PC-9 (cell line): ENCODE measurements at regions of chr2 and their contacts with region 1.

Region 1: GRCh38 chr2:170145675-170146432 is 32.1 kb upstream of the MYO3B start:
- DNase-seq: no peak
- H3K4me3 ChIP-seq: no peak overlapping the region
- H3K27ac ChIP-seq: no peak overlapping the region
- H3K4me1 ChIP-seq: peaks cover 19% of the 10 kb centered on the region
- H3K27me3 ChIP-seq: no peaks in the 10 kb centered on the region
- CTCF ChIP-seq: no peak

Region 2: DNA sequence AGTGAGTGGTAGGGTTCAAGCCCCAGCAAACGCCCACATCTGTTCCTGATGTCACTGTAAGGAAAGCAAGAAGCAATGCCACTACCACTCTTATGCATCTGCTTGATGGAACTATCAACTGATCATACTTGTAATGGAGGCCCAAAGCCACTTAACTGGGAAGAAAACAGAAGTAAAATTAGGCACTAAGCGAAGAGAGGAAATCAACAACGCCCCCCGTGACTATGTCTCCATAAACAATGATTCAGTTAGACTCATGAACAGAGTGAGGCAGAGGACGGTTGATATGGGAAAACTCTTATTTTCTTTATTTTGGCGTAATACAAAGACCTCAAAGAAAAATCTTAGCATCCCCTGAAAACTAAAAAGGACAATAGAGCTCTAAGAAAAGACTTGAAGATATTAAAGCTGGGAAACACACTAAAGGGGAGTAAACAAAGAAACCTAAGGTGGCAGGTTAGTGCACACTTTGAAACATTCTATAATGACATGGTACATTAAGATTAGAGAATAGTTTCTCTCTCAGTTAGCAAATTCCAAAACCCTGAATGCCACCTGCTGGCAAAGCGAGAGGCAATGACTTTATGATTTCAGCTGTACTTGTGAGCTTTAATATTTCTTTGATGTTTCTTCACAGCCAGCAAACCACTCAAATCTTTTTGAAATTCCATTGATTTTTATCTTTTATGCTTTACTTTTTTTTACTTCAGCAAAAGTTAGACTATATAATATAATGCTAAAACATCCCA is 870.0 kb before region 1 on chr2:
- CTCF ChIA-PET with region 1: no interaction called
- POLR2A ChIA-PET with region 1: no interaction called
- intact Hi-C with region 1: no loop called
- DNase-seq: peak in 1 of 2 experiments; percentile 1
- H3K4me3 ChIP-seq: no peak overlapping the region
- H3K27ac ChIP-seq: no peak overlapping the region
- H3K4me1 ChIP-seq: no peaks in the 10 kb centered on the region
- H3K27me3 ChIP-seq: no peaks in the 10 kb centered on the region
- CTCF ChIP-seq: peak; percentile 47; the same call in 1 of the 2 replicates

Region 3: GRCh38 chr2:170162271-170162632 is 16.4 kb after region 1 on chr2:
- CTCF ChIA-PET with region 1: interaction called, 12 read pairs
- POLR2A ChIA-PET with region 1: no interaction called
- intact Hi-C with region 1: no loop called
- DNase-seq: peak; percentile 9 to 91
- H3K4me3 ChIP-seq: no peak overlapping the region
- H3K27ac ChIP-seq: peak overlapping the region; percentile 19; the same call in 1 of the 2 replicates
- H3K4me1 ChIP-seq: peaks cover 16% of the 10 kb centered on the region
- H3K27me3 ChIP-seq: no peaks in the 10 kb centered on the region
- CTCF ChIP-seq: no peak

Region 4: DNA sequence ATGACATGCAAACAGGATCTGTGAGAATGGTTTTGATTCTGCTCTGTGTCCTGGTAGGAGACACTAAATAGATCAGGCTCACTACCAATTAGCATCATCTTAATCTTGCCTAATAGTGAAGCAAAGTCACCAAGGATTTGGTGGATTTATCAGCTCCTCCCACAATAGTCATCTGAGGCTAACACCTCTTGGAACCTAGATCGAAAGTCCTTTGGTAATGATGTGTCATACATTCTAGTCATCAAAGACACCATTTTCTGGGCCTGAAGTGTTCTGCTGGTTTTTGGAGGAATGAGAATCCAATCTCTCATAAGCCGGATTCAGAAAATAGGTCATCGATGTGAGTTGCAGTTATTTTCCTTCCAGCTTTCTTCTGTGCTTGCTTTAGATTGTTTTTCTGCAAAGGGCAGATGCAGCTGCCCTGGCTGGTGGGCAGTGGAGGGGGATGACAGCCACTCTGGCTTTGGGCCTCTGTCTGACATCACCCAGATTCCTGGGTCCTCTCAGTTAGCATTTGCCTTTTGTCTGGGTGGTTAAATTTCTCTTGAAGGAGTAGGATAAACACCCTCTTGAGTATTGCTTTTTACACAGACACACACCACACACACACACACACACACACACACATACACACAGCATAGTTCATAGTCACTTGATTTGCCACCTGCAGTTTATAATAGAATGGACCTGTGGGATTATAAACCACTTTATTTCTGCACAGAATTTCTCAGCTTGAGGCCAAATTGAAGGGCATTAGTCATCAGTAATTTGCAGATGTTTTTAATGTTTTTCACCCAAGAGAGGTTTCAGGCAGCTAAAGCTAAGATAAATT is 32.3 kb after region 1 on chr2 and contains the start of gene MYO3B:
- CTCF ChIA-PET with region 1: no interaction called
- POLR2A ChIA-PET with region 1: no interaction called
- intact Hi-C with region 1: no loop called
- DNase-seq: no peak
- H3K4me3 ChIP-seq: no peak within 1 kb of the TSS
- H3K27ac ChIP-seq: no peak within 1 kb of the TSS
- H3K4me1 ChIP-seq: peaks cover 28% of the 10 kb centered on the region
- H3K27me3 ChIP-seq: no peaks in the 10 kb centered on the region
- CTCF ChIP-seq: no peak
- total RNA-seq, gene MYO3B: 5.3 and 6.7 TPM in 2 replicates

Region 5: DNA sequence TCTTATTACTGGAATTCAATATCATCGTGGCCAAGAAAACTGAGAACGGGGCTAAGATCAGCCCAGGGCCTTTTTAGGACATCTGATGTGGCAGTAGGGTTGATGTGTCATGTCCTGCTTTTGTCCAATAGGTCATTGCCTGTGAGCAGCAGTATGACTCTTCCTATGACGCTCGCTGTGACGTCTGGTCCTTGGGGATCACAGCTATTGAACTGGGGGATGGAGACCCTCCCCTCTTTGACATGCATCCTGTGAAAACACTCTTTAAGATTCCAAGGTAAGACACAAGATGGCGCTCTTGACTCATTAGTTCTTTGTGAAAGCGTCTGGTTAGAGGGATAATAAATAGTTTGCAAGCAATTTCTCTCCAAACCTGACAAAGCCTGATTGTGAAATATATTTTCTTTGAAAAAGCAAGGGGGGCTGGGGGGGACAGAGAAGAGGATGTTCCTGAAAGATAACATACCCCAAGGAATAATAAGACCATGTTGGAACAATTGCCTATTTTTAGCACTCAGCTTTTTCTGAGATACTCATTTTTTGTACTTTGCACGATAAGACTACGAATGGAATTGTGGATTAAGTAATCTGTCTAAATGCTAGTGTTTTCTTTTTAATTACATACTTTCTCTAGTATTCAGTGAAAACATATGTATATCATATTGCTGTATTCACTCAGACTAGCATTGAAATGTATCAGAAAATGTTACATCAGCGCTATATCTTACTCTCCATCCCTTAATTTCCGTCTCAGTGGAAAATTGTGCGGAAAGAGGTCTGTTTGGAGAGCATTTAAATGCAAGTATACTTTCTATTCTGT is 90.2 kb after region 1 on chr2:
- CTCF ChIA-PET with region 1: no interaction called
- POLR2A ChIA-PET with region 1: no interaction called
- intact Hi-C with region 1: no loop called
- DNase-seq: peak; percentile 22 to 45
- H3K4me3 ChIP-seq: no peak overlapping the region
- H3K27ac ChIP-seq: no peak overlapping the region
- H3K4me1 ChIP-seq: no peaks in the 10 kb centered on the region
- H3K27me3 ChIP-seq: no peaks in the 10 kb centered on the region
- CTCF ChIP-seq: peak; percentile 78